ENCODE measurements at regions of chr19 and their contacts with region 1.

Region 1: DNA sequence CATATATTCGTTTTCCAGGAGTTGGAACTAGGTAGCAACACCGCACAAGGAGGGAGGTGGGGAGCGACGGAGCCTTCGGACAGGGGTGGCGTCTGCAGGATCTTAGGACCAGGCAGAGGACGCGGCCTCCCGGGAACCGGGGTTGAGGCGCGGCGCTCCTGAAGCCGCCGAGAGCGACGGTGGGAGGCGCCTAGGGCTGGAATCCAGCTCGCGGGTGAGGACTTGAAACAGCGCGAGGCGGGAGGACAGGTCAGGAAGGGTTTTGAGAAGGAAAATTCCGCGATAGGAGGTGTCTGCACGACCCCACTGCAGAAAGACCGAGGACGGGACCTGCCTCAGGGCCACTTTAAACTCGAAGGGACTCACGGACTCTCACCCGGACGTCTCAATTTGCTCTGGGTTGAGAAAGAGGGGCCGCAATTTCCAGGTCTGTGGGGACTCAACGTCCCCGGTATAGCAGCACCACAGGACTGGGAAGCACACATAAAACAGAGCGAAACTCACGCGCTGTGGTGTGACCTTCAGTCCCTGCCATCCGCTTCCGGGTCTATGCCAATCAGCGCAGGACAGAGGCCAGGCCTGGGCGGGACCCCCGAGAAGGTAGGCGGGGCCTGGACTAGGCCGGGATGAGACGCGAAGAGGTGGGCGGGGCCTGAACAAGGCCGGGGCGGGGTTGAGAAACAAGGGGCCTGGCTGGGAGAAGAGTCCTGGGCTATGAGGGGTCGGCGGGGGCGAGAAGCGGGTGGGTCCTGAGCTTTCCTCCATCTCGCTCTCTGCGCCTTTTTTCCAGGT is at the start of gene ZNF320:
- DNase-seq: peak; percentile 90
- H3K4me3 Mint-ChIP-seq: peak within 1 kb of the TSS; percentile 92
- H3K27ac Mint-ChIP-seq: peak within 1 kb of the TSS; percentile 87
- H3K4me1 Mint-ChIP-seq: peaks cover 4% of the 10 kb centered on the region
- H3K27me3 Mint-ChIP-seq: no peaks in the 10 kb centered on the region
- total RNA-seq, gene ZNF320: 10.5 and 11.0 TPM in 2 replicates

Region 2: GRCh38 chr19:52535771-52536447 is 361.4 kb before region 1 on chr19:
- intact Hi-C with region 1: loop called (anchors 2 kb)
- DNase-seq: peak; percentile 80
- H3K4me3 Mint-ChIP-seq: peak overlapping the region; percentile 84
- H3K27ac Mint-ChIP-seq: peak overlapping the region; percentile 88
- H3K4me1 Mint-ChIP-seq: peaks cover 11% of the 10 kb centered on the region
- H3K27me3 Mint-ChIP-seq: no peaks in the 10 kb centered on the region

Region 3: DNA sequence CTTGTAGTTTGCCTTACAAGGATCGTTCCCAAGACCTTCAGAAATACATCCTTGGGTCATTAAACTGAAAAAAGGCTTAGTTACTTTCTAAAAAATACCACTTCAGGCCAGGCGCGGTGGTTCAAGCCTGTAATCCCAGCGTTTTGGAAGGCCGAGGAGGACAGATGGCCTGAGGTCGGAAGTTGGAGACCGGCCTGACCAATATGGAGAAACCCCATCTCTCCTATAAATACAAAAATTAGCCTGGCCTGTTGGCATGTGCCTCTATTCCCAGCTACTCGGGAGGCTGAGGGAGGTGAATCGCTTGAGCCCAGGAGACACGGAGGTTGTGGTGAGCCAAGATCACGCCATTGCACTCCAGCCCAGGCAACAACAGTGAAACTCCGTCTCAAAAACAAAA is 73.7 kb before region 1 on chr19:
- intact Hi-C with region 1: loop called (anchors 1 kb)
- DNase-seq: no peak
- H3K4me3 Mint-ChIP-seq: no peak overlapping the region
- H3K27ac Mint-ChIP-seq: no peak overlapping the region
- H3K4me1 Mint-ChIP-seq: peaks cover 9% of the 10 kb centered on the region
- H3K27me3 Mint-ChIP-seq: no peaks in the 10 kb centered on the region

Region 4: GRCh38 chr19:52853880-52854279 is 43.5 kb before region 1 on chr19:
- intact Hi-C with region 1: loop called (anchors 1 kb)
- DNase-seq: no peak
- H3K4me3 Mint-ChIP-seq: no peak overlapping the region
- H3K27ac Mint-ChIP-seq: no peak overlapping the region
- H3K4me1 Mint-ChIP-seq: peaks cover 22% of the 10 kb centered on the region
- H3K27me3 Mint-ChIP-seq: no peaks in the 10 kb centered on the region

Region 5: DNA sequence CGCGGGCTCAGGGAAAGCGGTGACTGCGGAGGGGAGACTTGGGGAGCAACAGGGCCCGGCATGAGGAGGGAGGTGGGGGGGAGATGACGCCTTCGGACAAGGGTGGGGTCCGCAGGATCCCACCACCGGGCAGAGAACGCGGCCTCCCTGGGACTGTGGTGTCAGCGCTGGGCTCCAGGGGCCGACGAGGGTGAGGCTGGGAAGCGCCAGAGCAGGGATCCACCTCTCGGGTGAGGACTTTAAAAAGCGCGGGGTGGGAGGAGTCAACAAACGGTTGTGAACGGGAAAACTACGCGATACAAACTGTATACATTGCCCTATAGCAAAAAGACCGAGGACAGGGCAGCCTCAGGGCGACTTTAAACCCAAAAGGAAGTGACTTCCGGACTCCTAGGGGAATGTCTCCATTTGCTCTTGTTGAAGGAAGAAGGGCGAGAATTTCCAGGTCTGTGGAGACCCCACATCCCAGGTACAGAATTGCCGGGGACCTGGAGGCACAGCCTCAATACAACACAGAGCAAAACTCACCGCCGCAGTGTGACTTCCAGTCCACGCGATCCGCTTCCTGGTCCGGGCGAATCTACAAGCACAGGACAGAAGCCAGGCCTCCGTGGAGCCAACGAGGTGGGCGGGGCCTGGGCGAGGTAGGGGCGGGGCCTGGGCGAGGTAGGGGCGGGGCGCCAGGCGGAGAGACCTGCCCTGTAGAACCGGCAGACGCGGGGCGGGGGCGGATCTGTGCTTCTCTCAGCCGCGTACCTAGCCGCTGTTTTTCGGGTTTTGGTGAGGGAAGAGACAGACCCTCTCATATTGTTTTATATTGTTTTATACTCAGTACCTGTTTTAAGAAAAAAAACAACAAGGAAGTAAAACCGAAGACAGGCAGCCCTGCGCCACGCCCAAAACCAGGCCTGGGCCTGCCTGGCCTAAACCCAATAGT is 25.8 kb after region 1 on chr19 and contains the start of gene ZNF888:
- intact Hi-C with region 1: loop called (anchors 2 kb)
- DNase-seq: peak; percentile 77
- H3K4me3 Mint-ChIP-seq: peak within 1 kb of the TSS; percentile 93
- H3K27ac Mint-ChIP-seq: peak within 1 kb of the TSS; percentile 96
- H3K4me1 Mint-ChIP-seq: peaks cover 31% of the 10 kb centered on the region
- H3K27me3 Mint-ChIP-seq: no peaks in the 10 kb centered on the region
- total RNA-seq, gene ZNF888: 4.2 and 4.6 TPM in 2 replicates

Region 6: DNA sequence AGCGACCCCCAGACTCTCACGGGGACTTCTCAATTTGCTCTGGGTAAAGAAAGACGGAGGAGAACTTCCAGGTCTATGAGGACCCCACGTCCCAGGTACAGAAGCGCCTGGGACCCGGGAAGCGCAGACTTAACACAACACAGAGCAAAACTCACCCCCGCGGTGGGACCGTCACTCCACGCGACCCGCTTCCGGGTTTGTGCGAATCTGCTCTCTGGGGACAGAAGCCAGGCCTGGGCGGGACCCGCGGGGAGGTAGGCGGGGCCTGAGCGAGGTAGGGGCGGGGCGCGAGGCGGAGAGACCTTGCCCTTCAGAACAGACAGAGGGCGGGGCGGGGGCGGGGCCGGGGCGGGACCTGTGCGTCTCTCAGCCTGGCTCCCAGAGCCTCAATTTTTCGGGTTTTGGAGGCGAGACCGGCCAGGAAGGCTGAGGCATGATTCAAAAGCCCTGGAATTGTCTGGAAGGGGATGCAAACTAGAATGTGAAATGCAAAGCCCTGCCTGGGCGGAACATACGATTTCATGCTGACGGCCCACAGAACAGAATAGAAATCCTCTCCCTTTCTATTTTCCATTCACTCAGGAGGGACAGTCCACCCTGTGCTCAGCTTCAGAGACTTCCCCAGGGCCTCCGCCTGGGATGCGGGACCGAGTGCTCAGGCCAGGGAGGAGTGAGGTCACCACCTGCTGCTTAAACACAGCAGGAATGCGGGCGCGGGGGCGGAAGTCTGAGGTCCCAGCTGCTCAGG is 45.2 kb after region 1 on chr19:
- intact Hi-C with region 1: loop called (anchors 1 kb)
- DNase-seq: peak; percentile 94
- H3K4me3 Mint-ChIP-seq: peak overlapping the region; percentile 89
- H3K27ac Mint-ChIP-seq: peak overlapping the region; percentile 88
- H3K4me1 Mint-ChIP-seq: peaks cover 27% of the 10 kb centered on the region
- H3K27me3 Mint-ChIP-seq: peaks cover 2% of the 10 kb centered on the region